ENCODE measurements at regions of chr1 and their contacts with region 1.

Region 1: DNA sequence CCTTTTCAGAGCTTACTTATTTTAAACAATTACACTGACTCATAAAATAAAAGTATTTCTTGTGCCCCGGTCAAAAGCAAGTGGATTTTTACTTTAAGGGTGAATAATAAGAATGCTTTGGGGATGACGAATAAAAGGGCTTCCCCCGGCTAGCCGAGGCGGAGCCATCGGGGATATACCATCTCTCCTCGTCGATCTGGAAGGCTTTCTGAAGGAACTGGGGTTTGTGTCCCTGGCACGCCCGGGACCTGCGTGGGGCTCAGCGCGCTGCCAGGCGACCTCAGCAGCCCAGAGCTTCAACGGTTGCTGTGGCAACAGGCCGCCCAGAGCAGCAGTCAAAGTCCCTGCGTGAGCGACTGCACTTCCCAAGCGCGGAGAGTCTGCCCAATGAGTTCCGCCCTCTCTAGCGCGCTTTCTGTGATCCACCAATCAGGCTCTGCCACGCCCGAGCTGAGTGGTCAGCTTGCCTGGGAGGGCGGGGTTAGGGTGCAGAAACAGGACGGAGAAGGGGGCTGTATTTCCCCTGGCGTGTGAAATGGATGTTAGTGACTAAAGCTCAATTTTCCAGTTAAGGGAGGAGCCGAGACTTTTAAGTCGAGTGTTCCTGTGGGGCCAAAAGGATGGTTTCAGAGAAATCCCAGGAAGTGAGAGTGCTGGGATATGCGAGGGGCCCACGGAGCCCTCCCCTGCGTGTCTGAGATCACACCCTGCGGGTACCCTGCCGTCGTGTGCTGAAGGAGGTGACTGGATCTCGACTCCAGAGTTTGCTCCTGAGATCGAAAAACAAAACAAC is 33.0 kb upstream of the MGST3 start:
- DNase-seq: peak; percentile 97
- H3K4me3 ChIP-seq: peak overlapping the region; percentile 46 to 76 (median 62)
- H3K27ac ChIP-seq: peak overlapping the region; percentile 72
- H3K4me1 ChIP-seq: peaks cover 13% of the 10 kb centered on the region
- H3K27me3 ChIP-seq: no peaks in the 10 kb centered on the region
- CTCF ChIP-seq: no peak

Region 2: DNA sequence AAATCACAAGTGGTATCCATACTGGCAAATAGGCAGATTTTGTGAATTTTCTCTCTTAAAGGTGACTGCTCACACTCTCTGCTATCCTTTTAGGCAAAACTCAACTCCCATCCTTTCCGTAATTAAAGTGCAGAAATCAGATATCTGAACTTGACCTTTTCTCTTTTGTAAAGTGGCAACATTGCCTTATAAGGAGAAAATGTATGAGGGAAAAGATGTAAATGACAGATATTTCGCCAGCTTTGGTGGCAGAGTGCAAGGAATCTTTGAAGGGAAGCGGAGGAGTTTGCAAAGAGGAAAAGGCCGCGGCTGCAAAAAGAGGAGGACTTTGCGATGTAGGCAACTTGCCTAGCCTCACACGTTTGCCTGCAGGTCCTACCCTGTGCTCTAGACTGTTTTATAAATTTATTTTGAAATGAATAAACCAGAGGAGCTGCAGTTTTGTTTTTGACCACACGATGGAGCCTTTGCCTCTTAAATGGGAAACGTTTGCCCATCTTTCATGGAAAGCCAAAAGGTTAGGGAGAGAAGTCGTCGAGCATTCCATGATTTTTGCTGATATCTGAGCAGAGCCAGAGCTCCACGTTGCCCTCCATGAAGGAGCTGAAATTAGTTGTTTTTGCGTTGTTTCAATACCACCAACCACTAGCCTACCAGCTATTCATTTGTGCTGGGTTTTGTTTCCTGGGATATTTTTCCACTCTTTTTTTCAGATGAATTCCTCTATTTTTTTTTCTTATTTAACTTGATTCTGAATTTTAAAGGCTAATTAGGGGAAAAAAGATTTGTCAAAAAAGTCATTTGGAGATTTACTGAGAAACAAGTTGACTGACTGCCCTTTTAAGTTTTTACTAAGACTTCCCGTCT is 483.8 kb before region 1 on chr1:
- CTCF ChIA-PET with region 1: no interaction called
- dilution Hi-C with region 1: no loop called
- in situ Hi-C with region 1: no loop called
- intact Hi-C with region 1: loop called (anchors 10 kb)
- DNase-seq: peak; percentile 38
- H3K4me3 ChIP-seq: no peak overlapping the region
- H3K27ac ChIP-seq: no peak overlapping the region
- H3K4me1 ChIP-seq: peaks cover 13% of the 10 kb centered on the region
- H3K27me3 ChIP-seq: no peaks in the 10 kb centered on the region
- CTCF ChIP-seq: peak; percentile 77 to 80

Region 3: GRCh38 chr1:165257969-165258459 is 340.1 kb before region 1 on chr1:
- CTCF ChIA-PET with region 1: no interaction called
- dilution Hi-C with region 1: no loop called
- in situ Hi-C with region 1: no loop called
- intact Hi-C with region 1: loop called (anchors 2 kb)
- DNase-seq: peak; percentile 55
- H3K4me3 ChIP-seq: no peak overlapping the region
- H3K27ac ChIP-seq: no peak overlapping the region
- H3K4me1 ChIP-seq: peaks cover 4% of the 10 kb centered on the region
- H3K27me3 ChIP-seq: no peaks in the 10 kb centered on the region
- CTCF ChIP-seq: peak; percentile 85 to 86

Region 4: GRCh38 chr1:165416876-165417275 is 181.2 kb before region 1 on chr1:
- CTCF ChIA-PET with region 1: no interaction called
- dilution Hi-C with region 1: no loop called
- in situ Hi-C with region 1: no loop called
- intact Hi-C with region 1: no loop called
- DNase-seq: no peak
- H3K4me3 ChIP-seq: no peak overlapping the region
- H3K27ac ChIP-seq: no peak overlapping the region
- H3K4me1 ChIP-seq: no peaks in the 10 kb centered on the region
- H3K27me3 ChIP-seq: peaks cover 4% of the 10 kb centered on the region
- CTCF ChIP-seq: no peak

Region 5: DNA sequence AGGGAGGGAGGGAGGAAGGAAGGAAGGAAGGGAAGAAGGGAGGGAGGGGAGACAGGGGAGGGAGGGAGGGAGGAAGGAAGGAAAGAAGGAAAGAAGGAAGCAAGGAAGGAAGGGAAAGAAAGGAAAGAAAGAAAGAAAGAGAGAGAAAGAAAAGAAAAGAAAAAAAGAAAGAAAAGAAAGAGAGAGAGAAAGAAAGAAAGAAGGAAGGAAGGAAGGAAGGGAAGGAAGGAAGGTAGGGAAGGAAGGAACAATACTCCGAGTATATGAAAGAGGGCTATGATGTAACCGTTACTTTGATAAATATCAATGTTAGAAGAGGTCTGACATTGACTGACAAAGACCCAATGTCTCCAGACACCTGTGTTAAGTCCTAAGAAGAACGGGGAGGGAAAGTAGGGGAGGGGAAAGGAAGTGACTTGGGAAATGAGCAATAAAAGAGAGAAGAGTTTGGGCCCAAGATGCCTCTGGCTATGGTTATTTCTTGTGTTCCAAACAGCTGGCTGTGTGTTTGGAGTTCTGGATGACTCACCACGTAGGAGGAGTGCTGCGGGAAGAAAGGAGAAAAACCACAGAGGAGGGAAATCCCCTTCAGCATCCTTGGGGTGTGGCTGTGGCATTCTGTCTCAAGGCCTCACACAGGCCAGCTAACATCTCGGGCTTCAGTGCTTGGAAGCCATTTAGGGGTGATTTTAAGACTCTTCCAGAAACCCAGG is 116.1 kb before region 1 on chr1:
- CTCF ChIA-PET with region 1: no interaction called
- dilution Hi-C with region 1: no loop called
- in situ Hi-C with region 1: no loop called
- intact Hi-C with region 1: loop called (anchors 5 kb)
- DNase-seq: peak; percentile 96
- H3K4me3 ChIP-seq: no peak overlapping the region
- H3K27ac ChIP-seq: no peak overlapping the region
- H3K4me1 ChIP-seq: peaks cover 5% of the 10 kb centered on the region
- H3K27me3 ChIP-seq: peaks cover 10% of the 10 kb centered on the region
- CTCF ChIP-seq: no peak

Region 6: GRCh38 chr1:165645654-165646366 is 47.7 kb after region 1 on chr1:
- CTCF ChIA-PET with region 1: no interaction called
- dilution Hi-C with region 1: no loop called
- in situ Hi-C with region 1: no loop called
- intact Hi-C with region 1: no loop called
- DNase-seq: no peak
- H3K4me3 ChIP-seq: no peak overlapping the region
- H3K27ac ChIP-seq: no peak overlapping the region
- H3K4me1 ChIP-seq: peaks cover 8% of the 10 kb centered on the region
- H3K27me3 ChIP-seq: no peaks in the 10 kb centered on the region
- CTCF ChIP-seq: no peak

Region 7: GRCh38 chr1:165717918-165718515 is 119.9 kb after region 1 on chr1:
- CTCF ChIA-PET with region 1: no interaction called
- dilution Hi-C with region 1: no loop called
- in situ Hi-C with region 1: no loop called
- intact Hi-C with region 1: loop called (anchors 1 kb)
- DNase-seq: peak; percentile 52
- H3K4me3 ChIP-seq: no peak overlapping the region
- H3K27ac ChIP-seq: no peak overlapping the region
- H3K4me1 ChIP-seq: no peaks in the 10 kb centered on the region
- H3K27me3 ChIP-seq: no peaks in the 10 kb centered on the region
- CTCF ChIP-seq: peak; percentile 77 to 87

Region 8: GRCh38 chr1:165898837-165899236 is 300.8 kb after region 1 on chr1:
- CTCF ChIA-PET with region 1: no interaction called
- dilution Hi-C with region 1: no loop called
- in situ Hi-C with region 1: loop called (anchors 10 kb)
- intact Hi-C with region 1: no loop called
- DNase-seq: peak; percentile 95
- H3K4me3 ChIP-seq: no peak overlapping the region
- H3K27ac ChIP-seq: peak overlapping the region; percentile 93
- H3K4me1 ChIP-seq: peaks cover 87% of the 10 kb centered on the region
- H3K27me3 ChIP-seq: no peaks in the 10 kb centered on the region
- CTCF ChIP-seq: no peak

Measured in mammary epithelial cell (primary cell).